Prostate gland (tissue), 2 donors: ENCODE measurements at regions of chr12 and their contacts with region 1.

Region 1: GRCh38 chr12:123601602-123602489 is at the start of gene DDX55:
- DNase-seq: peak; percentile 72
- H3K4me3 ChIP-seq: peak within 1 kb of the TSS; percentile 58 to 86
- H3K27ac ChIP-seq: peak within 1 kb of the TSS; percentile 84 to 89
- H3K4me1 ChIP-seq: no peaks in the 10 kb centered on the region
- H3K27me3 ChIP-seq: no peaks in the 10 kb centered on the region
- CTCF ChIP-seq: peak; percentile 49 to 75 (median 71)
- POLR2A ChIP-seq: no peak
- total RNA-seq, gene DDX55: 13.7 to 24.4 TPM

Region 2: GRCh38 chr12:123269384-123269892 is 332.4 kb before region 1 on chr12:
- intact Hi-C with region 1: loop called (anchors 5 kb)
- DNase-seq: peak; percentile 62
- H3K4me3 ChIP-seq: peak overlapping the region; percentile 78 to 81
- H3K27ac ChIP-seq: peak overlapping the region; percentile 86 to 88
- H3K4me1 ChIP-seq: peaks cover 11% of the 10 kb centered on the region
- H3K27me3 ChIP-seq: no peaks in the 10 kb centered on the region
- CTCF ChIP-seq: no peak
- POLR2A ChIP-seq: no peak